Naive thymus-derived CD4-positive, alpha-beta T cell (primary cell): ENCODE measurements at regions of chr12 and their contacts with region 1.

Region 1: GRCh38 chr12:132908145-132909044 is 21.0 kb upstream of the CHFR start:
- DNase-seq: peak; percentile 79 to 98 (median 96)
- ATAC-seq: peak; percentile 93
- H3K4me3 ChIP-seq: peak overlapping the region; percentile 72
- H3K4me3 Mint-ChIP-seq: peak overlapping the region; percentile 83 to 98 (median 94)
- H3K27ac ChIP-seq: peak overlapping the region; percentile 92
- H3K27ac Mint-ChIP-seq: peak overlapping the region; percentile 92 to 99 (median 97)
- H3K4me1 ChIP-seq: no peaks in the 10 kb centered on the region
- H3K4me1 Mint-ChIP-seq: peaks cover 6 to 41% (median 22%) of the 10 kb centered on the region in 7 donors
- H3K27me3 ChIP-seq: no peaks in the 10 kb centered on the region
- H3K27me3 Mint-ChIP-seq: peaks cover 0 to 29% (median 0%) of the 10 kb centered on the region in 5 donors

Region 2: GRCh38 chr12:132214891-132215290 is 693.5 kb before region 1 on chr12:
- CTCF ChIA-PET with region 1: no interaction called
- POLR2A ChIA-PET with region 1: no interaction called
- intact Hi-C with region 1: no loop called
- DNase-seq: no peak
- ATAC-seq: no peak
- H3K4me3 ChIP-seq: no peak overlapping the region
- H3K4me3 Mint-ChIP-seq: peak overlapping the region in 1 of 10 donors; percentile 12
- H3K27ac ChIP-seq: no peak overlapping the region
- H3K27ac Mint-ChIP-seq: no peak overlapping the region
- H3K4me1 ChIP-seq: peaks cover 0 to 3% of the 10 kb centered on the region in 2 donors
- H3K4me1 Mint-ChIP-seq: peaks cover 0 to 6% (median 5%) of the 10 kb centered on the region in 7 donors
- H3K27me3 ChIP-seq: no peaks in the 10 kb centered on the region
- H3K27me3 Mint-ChIP-seq: peaks cover 0 to 9% (median 4%) of the 10 kb centered on the region in 5 donors

Region 3: DNA sequence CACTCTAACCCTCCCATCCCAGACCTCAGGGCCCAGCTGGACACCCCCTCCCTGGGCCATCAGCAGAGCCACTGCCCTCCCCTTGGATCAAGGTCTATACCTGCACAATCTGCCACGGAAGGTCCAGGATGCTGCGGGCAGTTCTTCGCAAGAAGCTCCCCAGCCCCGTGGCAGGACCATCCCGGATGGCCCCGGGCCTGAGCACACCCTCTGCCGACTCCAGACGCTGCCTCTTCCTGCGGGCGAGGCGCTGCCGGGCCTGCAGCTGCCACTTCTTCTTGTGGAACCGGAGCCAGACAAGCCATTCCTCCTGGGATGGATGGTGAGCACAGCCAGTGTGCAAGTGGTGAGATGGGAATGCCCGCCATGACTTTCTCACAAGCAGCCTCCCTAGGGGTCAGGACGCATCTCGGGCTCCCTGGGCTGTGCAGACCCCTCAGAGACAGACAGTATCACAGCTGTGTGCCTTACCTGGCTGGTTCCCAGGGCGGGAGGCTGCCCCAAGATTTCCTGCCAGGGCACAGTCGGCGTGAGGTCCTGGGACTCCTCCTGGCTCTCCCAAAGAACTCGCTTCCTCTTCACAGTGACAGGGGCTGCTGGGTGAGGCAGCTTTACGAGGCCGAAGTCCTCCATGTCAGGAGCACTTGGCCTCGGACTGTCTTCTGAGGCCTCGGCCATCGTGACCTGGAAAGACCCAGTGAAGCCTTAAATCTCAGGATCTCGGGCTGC is 259.0 kb before region 1 on chr12:
- CTCF ChIA-PET with region 1: no interaction called
- POLR2A ChIA-PET with region 1: no interaction called
- intact Hi-C with region 1: no loop called
- DNase-seq: no peak
- ATAC-seq: no peak
- H3K4me3 ChIP-seq: no peak overlapping the region
- H3K4me3 Mint-ChIP-seq: no peak overlapping the region
- H3K27ac ChIP-seq: no peak overlapping the region
- H3K27ac Mint-ChIP-seq: no peak overlapping the region
- H3K4me1 ChIP-seq: no peaks in the 10 kb centered on the region
- H3K4me1 Mint-ChIP-seq: no peaks in the 10 kb centered on the region
- H3K27me3 ChIP-seq: no peaks in the 10 kb centered on the region
- H3K27me3 Mint-ChIP-seq: no peaks in the 10 kb centered on the region

Region 4: DNA sequence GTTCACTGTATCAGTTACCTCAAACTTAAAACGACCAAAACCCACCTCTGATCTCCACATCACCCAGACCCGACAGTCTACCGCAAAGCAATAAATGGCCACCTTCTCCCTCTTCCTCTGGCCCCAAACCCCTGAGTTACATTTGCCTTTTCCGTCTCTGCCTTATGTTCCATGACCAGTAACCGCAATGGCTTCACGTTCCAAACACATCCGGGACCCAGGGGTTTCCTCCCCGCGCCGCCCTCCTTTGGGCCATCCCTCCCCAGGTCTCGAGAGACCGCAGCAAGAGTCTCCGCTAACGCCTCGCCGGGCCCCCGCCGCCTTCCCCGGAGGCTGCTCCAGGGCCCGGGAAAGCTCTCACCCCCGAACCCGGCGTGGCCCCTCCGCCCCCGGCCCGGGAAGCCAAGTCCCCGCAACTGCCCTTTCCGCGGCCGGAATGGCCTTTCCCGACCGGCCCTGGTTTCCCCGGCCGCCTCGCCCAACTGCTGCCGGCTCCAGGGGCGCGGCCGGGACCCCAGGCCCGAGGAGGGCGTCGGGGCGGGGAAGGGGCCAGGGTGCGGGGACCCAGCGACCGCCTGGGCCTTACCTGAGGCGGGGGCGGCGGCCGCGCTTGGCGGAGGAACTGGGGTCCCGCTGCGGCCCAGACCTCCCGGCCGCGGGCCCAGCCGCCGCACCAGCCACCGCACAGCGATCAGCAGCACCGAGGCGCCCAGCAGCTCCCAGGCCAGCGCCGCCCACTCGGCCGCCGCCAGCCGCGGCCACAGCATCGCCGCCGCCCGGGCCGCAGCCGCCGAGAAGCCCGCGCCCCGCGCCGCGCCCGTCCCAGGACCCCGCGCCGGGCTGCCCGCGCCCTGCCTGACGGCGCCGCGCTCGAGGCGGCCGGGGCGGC is 147.1 kb before region 1 on chr12 and contains the start of gene ANKLE2:
- CTCF ChIA-PET with region 1: interaction called, 29 read pairs
- POLR2A ChIA-PET with region 1: interaction called, 4 read pairs
- intact Hi-C with region 1: loop called (anchors 1 to 2 kb)
- DNase-seq: peak; percentile 35 to 77 (median 63)
- ATAC-seq: peak; percentile 75
- H3K4me3 ChIP-seq: peak within 1 kb of the TSS; percentile 88
- H3K4me3 Mint-ChIP-seq: peak within 1 kb of the TSS; percentile 89 to 97 (median 94)
- H3K27ac ChIP-seq: peak within 1 kb of the TSS; percentile 87
- H3K27ac Mint-ChIP-seq: peak within 1 kb of the TSS; percentile 92 to 97 (median 95)
- H3K4me1 ChIP-seq: peaks cover 9 to 13% of the 10 kb centered on the region in 2 donors
- H3K4me1 Mint-ChIP-seq: peaks cover 25 to 43% (median 26%) of the 10 kb centered on the region in 7 donors
- H3K27me3 ChIP-seq: no peaks in the 10 kb centered on the region
- H3K27me3 Mint-ChIP-seq: no peaks in the 10 kb centered on the region
- total RNA-seq, gene ANKLE2: 69.5 to 95.5 (median 92.2) TPM

Region 5: DNA sequence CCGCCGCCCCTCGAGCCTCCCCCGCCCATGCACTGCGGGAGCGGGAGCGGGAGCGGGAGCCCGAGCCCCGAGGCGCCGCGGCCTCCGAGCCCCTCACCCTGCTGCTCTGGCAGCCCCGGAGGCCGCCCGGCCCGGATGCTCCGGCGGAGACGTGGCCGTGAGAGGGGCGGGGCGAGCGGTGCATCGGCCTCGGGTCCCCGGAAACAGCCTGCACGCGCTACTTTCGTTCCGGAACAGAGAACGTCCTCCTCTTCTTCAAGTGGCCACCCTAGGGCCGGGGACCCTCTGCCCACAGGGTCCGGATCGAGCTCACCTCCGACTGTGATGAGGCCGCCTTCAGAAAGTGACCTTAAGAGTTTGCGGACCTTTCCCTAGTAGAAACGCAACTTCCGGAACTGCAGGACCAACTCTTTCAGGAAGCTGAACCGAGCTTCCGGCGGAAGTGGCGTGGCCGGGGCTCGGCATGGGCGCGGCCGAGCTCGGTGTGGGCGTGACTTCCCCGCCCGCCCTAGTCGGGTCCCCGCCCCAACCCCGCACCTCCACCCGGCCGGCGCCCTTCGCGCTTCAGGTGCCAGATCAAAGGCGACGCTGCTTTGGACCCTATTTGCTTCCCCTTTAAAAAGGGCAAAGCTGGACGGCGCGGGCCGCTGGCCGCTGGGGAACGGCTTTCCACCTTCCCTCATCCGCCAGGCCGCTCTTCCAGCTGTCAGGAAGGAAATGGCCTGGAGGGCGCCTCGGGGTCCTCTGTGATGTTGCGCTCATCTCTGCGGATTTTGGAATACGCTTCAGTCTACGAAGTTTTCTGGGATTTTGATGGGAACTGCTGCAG is 79.5 kb before region 1 on chr12 and contains the start of gene GOLGA3:
- CTCF ChIA-PET with region 1: interaction called, 7 read pairs
- POLR2A ChIA-PET with region 1: interaction called, 13 read pairs
- intact Hi-C with region 1: loop called (anchors 1 to 2 kb)
- DNase-seq: peak; percentile 92 to 98 (median 95)
- ATAC-seq: peak; percentile 96
- H3K4me3 ChIP-seq: peak within 1 kb of the TSS; percentile 95
- H3K4me3 Mint-ChIP-seq: peak within 1 kb of the TSS; percentile 92 to 98 (median 96)
- H3K27ac ChIP-seq: peak within 1 kb of the TSS; percentile 99
- H3K27ac Mint-ChIP-seq: peak within 1 kb of the TSS; percentile 98 to 100 (median 100)
- H3K4me1 ChIP-seq: peaks cover 8 to 25% of the 10 kb centered on the region in 2 donors
- H3K4me1 Mint-ChIP-seq: peaks cover 28 to 69% (median 58%) of the 10 kb centered on the region in 7 donors
- H3K27me3 ChIP-seq: no peaks in the 10 kb centered on the region
- H3K27me3 Mint-ChIP-seq: peaks cover 0 to 3% (median 0%) of the 10 kb centered on the region in 5 donors
- total RNA-seq, gene GOLGA3: 46.3 to 65.7 (median 63.6) TPM

Region 6: DNA sequence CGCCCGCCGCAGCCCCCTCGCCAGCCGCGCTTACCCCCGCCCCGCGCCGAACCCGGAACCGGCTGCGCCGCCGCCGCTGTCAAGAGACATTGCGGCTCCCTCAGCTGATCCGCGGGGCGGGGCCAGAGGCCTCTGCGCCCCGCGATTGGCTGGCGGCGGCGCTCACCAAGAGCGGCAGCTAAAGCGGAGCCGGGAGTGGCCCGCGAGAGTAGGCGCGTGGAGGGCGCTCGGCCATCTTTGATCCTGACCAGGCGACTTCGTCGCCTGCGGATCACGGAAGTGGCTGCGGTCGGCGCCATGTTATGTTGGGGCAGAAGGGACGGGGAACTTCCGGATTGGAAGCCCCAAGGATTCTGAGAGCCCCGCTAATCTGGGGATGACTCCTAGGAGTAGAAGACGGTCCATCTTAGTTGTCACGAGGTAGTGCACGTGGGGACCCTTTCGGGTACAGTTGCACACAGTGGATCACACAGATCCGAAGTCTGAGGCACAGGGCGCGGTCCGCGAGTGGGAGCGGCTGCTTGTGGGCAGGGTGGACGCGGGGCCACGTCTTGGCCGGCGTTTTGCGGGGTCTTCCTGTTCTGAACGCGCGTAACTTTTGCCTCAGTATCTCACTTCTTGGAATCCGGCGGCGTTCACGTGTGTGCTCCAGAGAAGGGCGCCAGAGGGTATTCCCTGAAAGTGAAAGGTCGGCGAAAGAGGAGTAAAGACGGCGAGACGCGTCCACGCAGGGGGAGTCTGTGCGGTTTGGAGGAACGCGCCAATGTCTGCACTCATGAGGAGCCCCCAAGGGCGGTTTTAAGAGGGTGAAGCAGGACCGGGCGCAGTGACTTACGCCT is 20.7 kb before region 1 on chr12 and contains the start of gene CHFR:
- CTCF ChIA-PET with region 1: interaction called, 8 read pairs
- POLR2A ChIA-PET with region 1: interaction called, 10 read pairs
- intact Hi-C with region 1: loop called (anchors 1 kb)
- DNase-seq: peak; percentile 89 to 95 (median 93)
- ATAC-seq: peak; percentile 99
- H3K4me3 ChIP-seq: peak within 1 kb of the TSS; percentile 100
- H3K4me3 Mint-ChIP-seq: peak within 1 kb of the TSS; percentile 93 to 100 (median 97)
- H3K27ac ChIP-seq: peak within 1 kb of the TSS; percentile 94
- H3K27ac Mint-ChIP-seq: peak within 1 kb of the TSS; percentile 98 to 100 (median 99)
- H3K4me1 ChIP-seq: peaks cover 9% of the 10 kb centered on the region in 2 donors
- H3K4me1 Mint-ChIP-seq: peaks cover 14 to 50% (median 32%) of the 10 kb centered on the region in 7 donors
- H3K27me3 ChIP-seq: no peaks in the 10 kb centered on the region
- H3K27me3 Mint-ChIP-seq: no peaks in the 10 kb centered on the region
- total RNA-seq, gene CHFR: 66.7 to 97.8 (median 81.7) TPM

Region 7: GRCh38 chr12:132998741-132999140 is 90.3 kb after region 1 on chr12:
- CTCF ChIA-PET with region 1: no interaction called
- POLR2A ChIA-PET with region 1: no interaction called
- intact Hi-C with region 1: no loop called
- DNase-seq: no peak
- ATAC-seq: no peak
- H3K4me3 ChIP-seq: peak overlapping the region; percentile 9
- H3K4me3 Mint-ChIP-seq: no peak overlapping the region
- H3K27ac ChIP-seq: no peak overlapping the region
- H3K27ac Mint-ChIP-seq: no peak overlapping the region
- H3K4me1 ChIP-seq: no peaks in the 10 kb centered on the region
- H3K4me1 Mint-ChIP-seq: peaks cover 0 to 18% (median 8%) of the 10 kb centered on the region in 7 donors
- H3K27me3 ChIP-seq: no peaks in the 10 kb centered on the region
- H3K27me3 Mint-ChIP-seq: no peaks in the 10 kb centered on the region

Region 8: GRCh38 chr12:133037207-133038005 is 129.0 kb after region 1 on chr12 and contains the start of gene ZNF84:
- CTCF ChIA-PET with region 1: no interaction called
- POLR2A ChIA-PET with region 1: interaction called, 4 read pairs
- intact Hi-C with region 1: loop called (anchors 1 kb)
- DNase-seq: peak; percentile 93 to 99 (median 97)
- ATAC-seq: peak; percentile 96
- H3K4me3 ChIP-seq: peak within 1 kb of the TSS; percentile 65
- H3K4me3 Mint-ChIP-seq: peak within 1 kb of the TSS; percentile 78 to 96 (median 94)
- H3K27ac ChIP-seq: peak within 1 kb of the TSS; percentile 94
- H3K27ac Mint-ChIP-seq: peak within 1 kb of the TSS; percentile 87 to 99 (median 94)
- H3K4me1 ChIP-seq: peaks cover 0 to 4% of the 10 kb centered on the region in 2 donors
- H3K4me1 Mint-ChIP-seq: peaks cover 0 to 37% (median 13%) of the 10 kb centered on the region in 7 donors
- H3K27me3 ChIP-seq: no peaks in the 10 kb centered on the region
- H3K27me3 Mint-ChIP-seq: peaks cover 0 to 9% (median 3%) of the 10 kb centered on the region in 5 donors
- total RNA-seq, gene ZNF84: 27.4 to 52.7 (median 31.6) TPM

Region 9: GRCh38 chr12:133181238-133181959 is 273.0 kb after region 1 on chr12 and contains the start of gene ZNF268:
- CTCF ChIA-PET with region 1: no interaction called
- POLR2A ChIA-PET with region 1: no interaction called
- intact Hi-C with region 1: loop called in 1 of 2 experiments (anchors 1 kb)
- DNase-seq: peak; percentile 75 to 90 (median 86)
- ATAC-seq: peak; percentile 99
- H3K4me3 ChIP-seq: peak within 1 kb of the TSS; percentile 100
- H3K4me3 Mint-ChIP-seq: peak within 1 kb of the TSS; percentile 90 to 99 (median 95)
- H3K27ac ChIP-seq: peak within 1 kb of the TSS; percentile 84
- H3K27ac Mint-ChIP-seq: peak within 1 kb of the TSS; percentile 85 to 97 (median 92)
- H3K4me1 ChIP-seq: peaks cover 7 to 9% of the 10 kb centered on the region in 2 donors
- H3K4me1 Mint-ChIP-seq: peaks cover 16 to 34% (median 31%) of the 10 kb centered on the region in 7 donors
- H3K27me3 ChIP-seq: no peaks in the 10 kb centered on the region
- H3K27me3 Mint-ChIP-seq: no peaks in the 10 kb centered on the region
- total RNA-seq, gene ZNF268: 13.6 to 38.6 (median 18.6) TPM